Cardiac septum (tissue), 1 donor: ENCODE measurements at regions of chr19 and their contacts with region 1.

Region 1: GRCh38 chr19:41934849-41935374 is 6.7 kb upstream of the ERFL start:
- DNase-seq: peak; percentile 87

Region 2: GRCh38 chr19:41859618-41860418 is 75.1 kb before region 1 on chr19 and contains the start of gene RPS19:
- intact Hi-C with region 1: no loop called
- DNase-seq: peak; percentile 99
- total RNA-seq, gene RPS19: 548 TPM

Region 3: DNA sequence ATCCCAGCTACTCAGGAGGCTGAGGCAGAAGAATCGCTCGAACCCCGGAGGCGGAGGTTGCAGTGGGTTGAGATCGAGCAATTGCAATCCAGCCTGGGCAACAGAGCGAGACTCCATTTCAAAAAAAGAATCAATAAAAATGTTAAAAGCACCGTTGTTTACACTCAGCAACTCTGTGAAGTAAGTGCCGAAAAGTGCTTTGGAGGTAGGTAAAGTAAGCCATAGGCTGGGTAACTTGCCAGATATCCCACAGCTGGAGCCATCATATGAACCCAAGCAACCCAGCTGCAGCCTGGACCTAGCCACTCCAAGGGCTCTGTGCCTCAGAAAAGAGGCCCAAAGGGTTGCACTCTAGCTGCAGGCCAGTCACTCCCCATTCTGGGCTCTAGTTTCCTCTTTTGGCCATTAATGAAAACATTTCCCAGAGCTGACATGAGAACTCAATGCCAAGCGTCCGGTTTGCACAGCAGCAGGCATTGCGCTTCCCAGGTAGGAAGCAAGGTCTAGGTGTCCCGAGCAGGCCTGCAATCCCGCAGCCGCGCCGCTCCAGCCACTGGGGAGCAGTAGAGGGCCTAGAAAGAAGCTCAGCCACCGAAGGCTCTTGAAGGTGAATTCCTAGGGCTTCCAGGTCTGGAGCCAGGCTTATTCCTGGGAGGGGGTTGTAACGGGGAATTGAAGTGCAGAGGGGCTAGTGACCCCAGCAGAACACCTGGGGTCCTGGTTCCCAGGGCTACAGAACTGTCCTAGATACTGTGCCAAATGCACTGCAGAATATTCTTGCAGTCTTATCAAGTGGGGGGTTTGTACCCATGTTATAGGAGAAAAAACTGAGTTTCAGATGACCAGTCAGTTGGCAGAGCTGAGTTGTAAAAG is 61.9 kb before region 1 on chr19:
- intact Hi-C with region 1: loop called (anchors 2 kb)
- DNase-seq: peak; percentile 89

Region 4: GRCh38 chr19:41912899-41913537 is 21.9 kb before region 1 on chr19:
- intact Hi-C with region 1: no loop called
- DNase-seq: no peak